Right cardiac atrium (tissue), 5 donors: ENCODE measurements at regions of chr11 and their contacts with region 1.

Region 1: DNA sequence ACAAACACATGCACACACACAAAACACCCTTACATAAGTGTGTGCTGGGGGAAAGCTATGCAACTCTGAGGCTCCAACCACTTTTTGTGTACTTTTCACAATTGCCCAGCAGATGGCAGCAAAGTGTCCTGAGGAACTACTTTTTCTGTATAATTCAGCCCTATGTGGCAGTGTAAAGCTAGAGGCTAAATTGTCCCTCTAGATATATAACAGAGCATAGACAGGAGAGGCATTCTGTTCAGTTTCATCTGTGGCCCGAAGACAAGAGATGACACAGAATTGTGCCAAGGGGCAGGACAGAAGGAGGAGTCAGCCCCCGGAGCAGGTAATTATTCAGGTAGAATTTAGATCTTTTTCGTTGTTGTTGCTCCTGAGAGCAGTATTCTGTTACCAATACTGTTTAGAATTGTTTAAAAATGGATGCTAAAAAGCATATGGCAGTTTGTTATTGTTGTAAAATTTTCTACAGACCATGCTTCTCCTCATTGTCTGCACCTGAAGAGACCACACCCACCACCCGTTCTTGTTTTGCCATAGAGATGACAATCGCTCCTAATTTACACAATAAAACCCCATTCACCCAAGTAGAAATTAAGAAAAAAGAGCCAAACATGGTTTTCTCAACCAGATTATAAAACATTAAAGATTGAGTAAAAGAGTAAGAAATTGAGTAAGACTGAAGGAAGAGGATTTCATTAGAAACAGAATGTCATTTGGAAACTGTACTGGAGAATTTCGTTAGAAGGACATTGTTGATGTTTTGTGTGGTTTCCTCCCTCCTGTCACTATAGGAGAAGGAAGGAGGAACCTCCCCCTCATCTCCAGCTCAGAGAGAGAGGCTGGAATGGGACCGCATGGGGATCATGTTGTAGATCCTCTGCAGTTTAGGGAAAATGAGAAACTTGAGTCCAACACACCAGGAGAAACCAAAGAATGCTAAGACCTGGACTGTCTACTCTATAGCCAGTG is 14.5 kb upstream of the MS4A7 start:
- DNase-seq: no peak
- ATAC-seq: peak; percentile 51 to 73
- H3K4me3 ChIP-seq: no peak overlapping the region
- H3K27ac ChIP-seq: no peak overlapping the region
- H3K4me1 ChIP-seq: no peaks in the 10 kb centered on the region
- H3K27me3 ChIP-seq: no peaks in the 10 kb centered on the region

Region 2: GRCh38 chr11:60318726-60319125 is 45.1 kb before region 1 on chr11:
- intact Hi-C with region 1: no loop called
- DNase-seq: no peak
- ATAC-seq: no peak
- H3K4me3 ChIP-seq: no peak overlapping the region
- H3K27ac ChIP-seq: no peak overlapping the region
- H3K4me1 ChIP-seq: no peaks in the 10 kb centered on the region
- H3K27me3 ChIP-seq: no peaks in the 10 kb centered on the region

Region 3: GRCh38 chr11:60609632-60610031 is 245.8 kb after region 1 on chr11:
- intact Hi-C with region 1: loop called in 1 of 4 experiments (anchors 10 kb)
- DNase-seq: no peak
- ATAC-seq: no peak
- H3K4me3 ChIP-seq: no peak overlapping the region
- H3K27ac ChIP-seq: no peak overlapping the region
- H3K4me1 ChIP-seq: no peaks in the 10 kb centered on the region
- H3K27me3 ChIP-seq: no peaks in the 10 kb centered on the region